ENCODE measurements at regions of chr4 and their contacts with region 1.

Region 1: GRCh38 chr4:145808021-145808650 is 128.2 kb downstream of the C4orf51 start:
- DNase-seq: peak; percentile 60
- H3K4me3 Mint-ChIP-seq: peak overlapping the region; percentile 30
- H3K27ac Mint-ChIP-seq: peak overlapping the region; percentile 89
- H3K4me1 Mint-ChIP-seq: peaks cover 65% of the 10 kb centered on the region
- H3K27me3 Mint-ChIP-seq: no peaks in the 10 kb centered on the region

Region 2: GRCh38 chr4:145481164-145481941 is 326.8 kb before region 1 on chr4 and contains the start of gene SMAD1:
- CTCF ChIA-PET with region 1: no interaction called
- POLR2A ChIA-PET with region 1: no interaction called
- intact Hi-C with region 1: loop called (anchors 10 kb)
- DNase-seq: peak; percentile 53
- H3K4me3 Mint-ChIP-seq: peak within 1 kb of the TSS; percentile 66
- H3K27ac Mint-ChIP-seq: no peak within 1 kb of the TSS
- H3K4me1 Mint-ChIP-seq: peaks cover 8% of the 10 kb centered on the region
- H3K27me3 Mint-ChIP-seq: peaks cover 38% of the 10 kb centered on the region
- total RNA-seq, gene SMAD1: 2.8 to 2.9 TPM

Region 3: GRCh38 chr4:145773581-145774234 is 34.4 kb before region 1 on chr4:
- CTCF ChIA-PET with region 1: no interaction called
- POLR2A ChIA-PET with region 1: no interaction called
- intact Hi-C with region 1: loop called (anchors 5 kb)
- DNase-seq: no peak
- H3K4me3 Mint-ChIP-seq: no peak overlapping the region
- H3K27ac Mint-ChIP-seq: peak overlapping the region; percentile 28
- H3K4me1 Mint-ChIP-seq: peaks cover 12% of the 10 kb centered on the region
- H3K27me3 Mint-ChIP-seq: no peaks in the 10 kb centered on the region

Region 4: DNA sequence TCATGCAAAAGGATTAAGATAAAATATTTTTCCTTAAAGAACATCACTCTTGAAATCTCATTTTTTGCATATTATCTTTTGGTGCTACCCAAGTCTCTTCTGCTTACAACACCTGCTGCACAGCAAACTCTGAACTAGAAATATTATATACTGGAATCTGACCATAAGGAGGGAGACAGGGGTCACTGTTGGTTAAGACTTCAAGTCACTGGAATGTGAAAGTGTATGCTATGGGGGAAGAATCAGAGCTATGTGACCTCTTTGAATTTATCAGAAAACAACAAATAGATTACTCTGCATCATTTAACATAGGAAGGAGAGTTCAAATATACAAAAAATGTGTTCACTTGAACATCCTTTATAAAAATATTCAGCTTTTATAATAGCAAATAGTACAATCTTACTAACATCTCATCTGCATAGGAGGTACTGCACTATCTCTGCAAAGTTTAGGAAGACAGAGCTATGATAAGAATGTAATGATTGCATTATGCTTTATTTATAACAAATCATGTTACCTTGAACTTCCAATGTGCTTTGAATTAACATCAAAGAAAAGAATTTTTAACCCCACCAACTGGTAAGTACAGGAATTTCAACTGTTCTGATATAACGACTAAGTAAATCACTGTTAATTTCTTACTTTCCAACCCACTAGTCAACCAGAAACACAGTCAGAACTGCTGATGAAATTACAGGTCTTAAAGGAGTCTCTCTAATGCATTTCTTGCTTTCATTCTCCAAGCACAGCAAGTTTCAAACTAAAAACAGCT is 60.7 kb after region 1 on chr4:
- CTCF ChIA-PET with region 1: no interaction called
- POLR2A ChIA-PET with region 1: interaction called, 3 read pairs
- intact Hi-C with region 1: loop called (anchors 1 kb)
- DNase-seq: no peak
- H3K4me3 Mint-ChIP-seq: no peak overlapping the region
- H3K27ac Mint-ChIP-seq: no peak overlapping the region
- H3K4me1 Mint-ChIP-seq: peaks cover 29% of the 10 kb centered on the region
- H3K27me3 Mint-ChIP-seq: no peaks in the 10 kb centered on the region

Region 5: GRCh38 chr4:146175541-146176453 is 367.7 kb after region 1 on chr4 and contains the start of gene LSM6:
- CTCF ChIA-PET with region 1: no interaction called
- POLR2A ChIA-PET with region 1: no interaction called
- intact Hi-C with region 1: loop called (anchors 2 kb)
- DNase-seq: peak; percentile 89
- H3K4me3 Mint-ChIP-seq: peak within 1 kb of the TSS; percentile 83
- H3K27ac Mint-ChIP-seq: peak within 1 kb of the TSS; percentile 87
- H3K4me1 Mint-ChIP-seq: peaks cover 42% of the 10 kb centered on the region
- H3K27me3 Mint-ChIP-seq: no peaks in the 10 kb centered on the region
- total RNA-seq, gene LSM6: 64.2 to 65.5 TPM

Measured in activated CD4-positive, alpha-beta memory T cell treated with anti-CD3 and anti-CD28 coated beads for 36 hours (primary cell).